ENCODE measurements at regions of chr4 and their contacts with region 1.

Region 1: DNA sequence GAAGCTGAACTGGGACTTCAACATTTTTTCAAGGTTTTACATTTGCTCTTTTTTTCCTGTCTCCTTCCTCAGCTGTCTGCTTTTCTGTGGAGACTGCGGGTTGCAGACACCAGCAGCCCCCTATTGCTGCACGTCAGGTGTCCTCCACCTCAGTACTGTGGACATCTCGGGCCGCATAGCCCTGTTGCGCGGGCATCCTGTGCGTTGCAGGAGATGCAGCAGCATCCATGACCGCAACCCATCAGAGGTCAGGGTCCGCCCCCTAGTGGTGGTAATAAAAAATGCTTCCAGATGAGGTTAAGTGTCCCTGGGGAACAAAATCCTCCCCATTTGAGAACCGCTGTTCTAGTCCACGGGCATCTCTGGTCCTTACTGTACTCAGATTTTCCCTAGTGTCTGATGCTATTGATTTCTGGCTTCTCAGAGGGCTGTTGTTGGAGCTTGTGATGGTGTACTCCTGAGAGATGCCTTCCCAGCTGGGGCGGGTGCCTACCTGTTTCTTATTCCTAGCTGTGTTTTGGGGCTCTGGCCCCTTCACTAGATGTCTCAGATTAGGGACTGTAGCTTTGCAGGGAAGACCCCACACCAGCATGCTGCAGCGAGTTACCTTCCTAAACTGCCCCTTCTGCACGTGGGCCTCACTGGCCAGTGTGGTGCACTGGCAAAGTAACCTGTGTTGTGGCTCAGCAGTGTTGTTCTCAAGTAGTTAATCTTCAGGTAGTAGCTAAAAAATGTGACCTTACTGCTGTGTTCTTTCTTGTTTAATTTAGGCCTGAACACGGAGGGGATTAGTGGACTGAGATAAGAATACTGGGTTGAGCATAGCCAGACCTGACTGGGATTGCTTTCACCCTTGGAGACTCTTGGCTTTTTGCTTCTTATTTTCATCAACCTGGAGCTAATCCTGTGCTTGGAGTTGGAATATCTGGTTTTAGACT is 28.2 kb downstream of the NSD2 start:
- DNase-seq: peak; percentile 84
- H3K4me3 Mint-ChIP-seq: no peak overlapping the region
- H3K27ac Mint-ChIP-seq: no peak overlapping the region
- H3K4me1 Mint-ChIP-seq: peaks cover 18% of the 10 kb centered on the region
- H3K27me3 Mint-ChIP-seq: no peaks in the 10 kb centered on the region

Region 2: DNA sequence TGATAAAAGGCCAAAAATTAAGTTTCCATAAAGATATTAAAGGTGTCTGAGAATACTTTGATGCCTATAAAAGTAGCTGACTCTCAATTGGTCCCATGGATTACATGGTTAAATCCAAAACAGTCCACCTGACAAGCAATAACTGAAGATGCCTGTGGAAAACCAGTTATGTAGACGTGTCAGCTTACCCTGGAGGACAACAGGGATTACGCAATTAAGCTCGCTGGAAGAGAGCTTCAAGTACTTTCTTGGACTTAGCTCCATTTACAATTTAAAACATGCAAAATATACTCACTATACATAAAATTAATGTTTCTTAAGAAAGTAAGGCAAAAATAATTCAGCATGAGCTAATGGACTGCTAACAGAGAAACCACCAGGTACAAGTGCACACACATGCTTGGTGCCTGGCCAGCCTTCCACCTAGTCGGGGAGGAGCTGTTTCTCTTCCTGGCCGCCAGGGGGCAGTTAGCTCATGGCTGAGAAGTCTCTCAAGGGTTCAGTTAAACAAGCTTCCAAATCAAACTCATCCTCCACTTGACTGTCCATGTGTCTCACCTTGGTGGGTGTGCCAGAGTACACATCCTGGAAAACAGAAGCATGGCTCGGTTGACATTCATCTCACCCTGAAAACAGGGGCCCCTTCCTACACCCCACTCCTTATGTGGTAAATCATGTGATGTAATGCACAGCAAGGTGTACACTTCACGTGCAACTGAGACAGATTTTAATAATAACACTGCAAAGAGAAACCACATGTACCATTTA is 206.1 kb before region 1 on chr4:
- CTCF ChIA-PET with region 1: interaction called, 10 read pairs
- intact Hi-C with region 1: no loop called
- DNase-seq: peak; percentile 80
- H3K4me3 Mint-ChIP-seq: no peak overlapping the region
- H3K27ac Mint-ChIP-seq: peak overlapping the region; percentile 25
- H3K4me1 Mint-ChIP-seq: peaks cover 3% of the 10 kb centered on the region
- H3K27me3 Mint-ChIP-seq: no peaks in the 10 kb centered on the region

Region 3: GRCh38 chr4:1809754-1810511 is 89.5 kb before region 1 on chr4:
- CTCF ChIA-PET with region 1: interaction called, 3 read pairs
- intact Hi-C with region 1: loop called (anchors 1 kb)
- DNase-seq: peak; percentile 84
- H3K4me3 Mint-ChIP-seq: no peak overlapping the region
- H3K27ac Mint-ChIP-seq: no peak overlapping the region
- H3K4me1 Mint-ChIP-seq: no peaks in the 10 kb centered on the region
- H3K27me3 Mint-ChIP-seq: no peaks in the 10 kb centered on the region

Region 4: DNA sequence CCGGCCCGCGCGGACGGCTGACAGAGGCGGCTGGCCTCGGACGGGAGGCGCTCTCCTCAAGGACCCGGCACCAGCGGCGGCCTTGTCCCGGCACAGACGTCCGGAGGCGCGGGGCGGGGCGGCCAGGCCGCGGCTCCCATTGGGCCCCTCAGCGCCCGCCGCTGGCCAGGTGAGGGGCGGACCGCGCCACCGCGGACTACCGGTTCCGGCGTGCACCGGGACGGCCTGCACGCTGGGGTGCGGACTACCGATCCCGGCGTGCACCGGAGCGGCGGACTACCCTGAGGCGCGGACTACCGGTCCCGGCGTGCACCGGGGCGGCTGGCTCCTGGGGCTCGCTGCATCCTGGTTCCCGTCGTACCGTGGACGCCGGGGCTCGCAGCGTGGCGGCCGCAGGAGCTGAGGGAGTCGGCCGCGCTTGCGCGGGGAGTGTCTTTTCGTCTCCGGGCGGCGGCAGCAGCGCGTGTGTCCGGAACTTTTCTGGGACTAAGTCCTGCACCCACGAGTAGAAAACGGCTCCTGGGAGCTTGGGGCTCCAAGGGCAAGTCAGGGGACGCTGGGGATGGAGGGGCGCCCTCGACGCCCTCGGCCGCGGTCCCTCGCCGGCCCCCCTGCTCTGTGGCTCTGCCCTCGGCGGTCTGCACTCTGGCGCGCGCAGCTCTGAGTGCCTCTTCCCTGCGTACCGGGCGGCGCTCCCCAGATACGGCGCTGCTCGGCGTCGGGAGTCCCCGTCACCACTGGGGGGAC is 43.2 kb before region 1 on chr4 and contains the start of gene LETM1:
- CTCF ChIA-PET with region 1: interaction called, 27 read pairs
- intact Hi-C with region 1: loop called (anchors 1 kb)
- DNase-seq: peak; percentile 95
- H3K4me3 Mint-ChIP-seq: peak within 1 kb of the TSS; percentile 79
- H3K27ac Mint-ChIP-seq: no peak within 1 kb of the TSS
- H3K4me1 Mint-ChIP-seq: peaks cover 38% of the 10 kb centered on the region
- H3K27me3 Mint-ChIP-seq: no peaks in the 10 kb centered on the region
- total RNA-seq, gene LETM1: 36.3 to 40.5 TPM

Region 5: GRCh38 chr4:1870578-1871443 is 28.6 kb before region 1 on chr4 and contains the start of gene NSD2:
- CTCF ChIA-PET with region 1: interaction called, 43 read pairs
- intact Hi-C with region 1: loop called (anchors 1 kb)
- DNase-seq: peak; percentile 90
- H3K4me3 Mint-ChIP-seq: peak within 1 kb of the TSS; percentile 92
- H3K27ac Mint-ChIP-seq: peak within 1 kb of the TSS; percentile 96
- H3K4me1 Mint-ChIP-seq: peaks cover 35% of the 10 kb centered on the region
- H3K27me3 Mint-ChIP-seq: no peaks in the 10 kb centered on the region
- total RNA-seq, gene NSD2: 246 to 250 TPM

Region 6: DNA sequence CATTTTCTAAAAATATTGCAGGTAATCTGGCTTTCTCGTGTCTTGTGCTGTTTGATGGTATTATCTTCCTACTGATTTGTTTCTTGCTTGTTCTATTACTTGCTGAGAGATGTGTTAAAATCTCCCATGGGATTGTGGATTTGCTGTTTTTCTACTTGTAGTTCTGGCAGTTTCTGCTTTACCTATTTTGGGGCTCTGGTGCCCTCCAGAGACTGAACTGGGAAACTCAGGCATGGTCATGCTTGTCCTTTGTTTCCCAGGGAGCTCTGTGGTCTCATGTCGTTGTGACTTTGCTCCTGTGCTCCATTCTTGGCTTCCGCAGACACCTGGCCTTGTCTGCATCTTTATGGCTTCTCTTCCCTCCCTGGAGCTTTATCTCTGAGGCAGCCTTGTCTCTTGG is 11.2 kb after region 1 on chr4:
- CTCF ChIA-PET with region 1: interaction called, 32 read pairs
- intact Hi-C with region 1: no loop called
- DNase-seq: peak; percentile 52
- H3K4me3 Mint-ChIP-seq: no peak overlapping the region
- H3K27ac Mint-ChIP-seq: no peak overlapping the region
- H3K4me1 Mint-ChIP-seq: peaks cover 14% of the 10 kb centered on the region
- H3K27me3 Mint-ChIP-seq: no peaks in the 10 kb centered on the region